ENCODE measurements at regions of chr6 and their contacts with region 1.

Region 1: DNA sequence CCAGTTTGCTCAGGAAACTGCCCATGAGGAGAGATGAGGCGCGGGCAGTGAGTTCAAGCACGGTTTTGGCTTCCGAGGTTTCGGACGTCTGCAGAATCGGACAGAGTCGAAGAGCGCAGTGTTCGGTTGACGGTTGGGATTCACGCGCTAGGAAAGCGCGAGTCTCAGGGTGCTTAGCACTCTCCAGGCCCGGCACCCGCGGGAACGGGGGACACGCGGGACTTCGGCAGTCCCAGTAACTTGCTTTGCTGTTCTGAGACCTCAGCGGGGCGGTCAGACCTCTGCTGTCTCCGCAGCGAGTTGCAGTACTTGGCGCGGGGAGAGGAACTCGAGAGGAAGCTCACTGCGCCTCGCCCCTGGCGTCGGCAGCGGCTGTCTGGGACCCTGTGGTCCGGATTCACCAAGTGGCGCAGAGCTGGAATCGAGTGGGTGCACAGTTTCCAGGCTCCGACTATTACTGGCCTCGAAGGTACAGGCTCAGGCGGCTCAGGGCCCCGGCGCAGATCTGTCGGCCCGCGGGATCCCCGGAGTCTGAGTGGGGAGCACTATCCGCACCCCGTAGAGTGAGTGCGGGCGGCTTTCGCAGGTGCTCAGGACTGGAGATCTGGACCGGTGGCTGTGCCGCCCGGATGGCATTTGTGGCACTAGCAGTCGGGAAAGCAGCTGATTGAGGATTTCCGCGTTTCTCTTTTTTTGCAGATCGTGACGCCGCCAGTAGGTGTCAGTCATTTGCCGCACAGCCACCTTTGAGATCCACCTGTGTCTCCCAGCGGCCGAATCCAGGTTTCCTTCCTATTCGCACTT is at the start of gene POM121L2:
- DNase-seq: peak; percentile 83
- H3K4me3 ChIP-seq: peak within 1 kb of the TSS; percentile 54
- H3K27ac ChIP-seq: no peak within 1 kb of the TSS
- H3K4me1 ChIP-seq: no peaks in the 10 kb centered on the region
- H3K27me3 ChIP-seq: peaks cover 25% of the 10 kb centered on the region
- CTCF ChIP-seq: peak; percentile 55
- total RNA-seq, gene POM121L2: 0.07 to 0.13 TPM

Region 2: DNA sequence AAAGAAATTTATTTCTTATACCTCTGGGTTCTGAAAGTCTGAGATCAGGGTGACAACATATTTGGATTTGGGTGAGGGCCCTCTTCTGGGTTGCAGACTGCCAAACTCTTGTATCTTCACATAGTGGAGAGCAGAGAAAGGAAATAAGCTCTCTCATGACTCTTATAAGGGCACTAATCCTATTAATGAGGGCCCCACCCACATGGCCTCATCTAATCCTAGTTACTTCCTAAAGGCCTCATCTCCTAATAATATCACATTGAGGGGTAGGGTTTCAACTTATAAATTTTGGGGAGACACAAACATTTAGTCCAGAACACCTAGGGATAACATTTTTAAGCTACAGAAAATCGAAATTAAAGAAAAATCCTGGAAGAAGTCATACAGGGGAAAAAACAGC is 71.1 kb after region 1 on chr6:
- intact Hi-C with region 1: no loop called
- DNase-seq: no peak
- H3K4me3 ChIP-seq: no peak overlapping the region
- H3K27ac ChIP-seq: no peak overlapping the region
- H3K4me1 ChIP-seq: no peaks in the 10 kb centered on the region
- H3K27me3 ChIP-seq: no peaks in the 10 kb centered on the region
- CTCF ChIP-seq: no peak

Region 3: GRCh38 chr6:27608916-27609883 is 296.9 kb after region 1 on chr6:
- intact Hi-C with region 1: loop called (anchors 10 kb)
- DNase-seq: peak; percentile 41
- H3K4me3 ChIP-seq: no peak overlapping the region
- H3K27ac ChIP-seq: no peak overlapping the region
- H3K4me1 ChIP-seq: no peaks in the 10 kb centered on the region
- H3K27me3 ChIP-seq: peaks cover 14% of the 10 kb centered on the region
- CTCF ChIP-seq: peak; percentile 52

Region 4: GRCh38 chr6:27761391-27761790 is 449.0 kb after region 1 on chr6:
- intact Hi-C with region 1: loop called (anchors 10 kb)
- DNase-seq: no peak
- H3K4me3 ChIP-seq: no peak overlapping the region
- H3K27ac ChIP-seq: no peak overlapping the region
- H3K4me1 ChIP-seq: no peaks in the 10 kb centered on the region
- H3K27me3 ChIP-seq: no peaks in the 10 kb centered on the region
- CTCF ChIP-seq: no peak